Breast epithelium (tissue), 4 donors: ENCODE measurements at regions of chr2 and their contacts with region 1.

Region 1: GRCh38 chr2:40554668-40555285 is 102.9 kb upstream of the SLC8A1 start:
- DNase-seq: peak in 1 of 2 donors; percentile 34
- H3K4me3 ChIP-seq: no peak overlapping the region
- H3K27ac ChIP-seq: no peak overlapping the region
- H3K4me1 ChIP-seq: no peaks in the 10 kb centered on the region
- H3K27me3 ChIP-seq: no peaks in the 10 kb centered on the region
- CTCF ChIP-seq: peak; percentile 38 to 61 (median 59)
- POLR2A ChIP-seq: no peak

Region 2: GRCh38 chr2:40511661-40512213 is 43.0 kb before region 1 on chr2:
- intact Hi-C with region 1: no loop called
- DNase-seq: no peak
- H3K4me3 ChIP-seq: peak overlapping the region; percentile 28 to 53 (median 33)
- H3K27ac ChIP-seq: peak overlapping the region in 1 of 2 donors; percentile 67
- H3K4me1 ChIP-seq: no peaks in the 10 kb centered on the region
- H3K27me3 ChIP-seq: no peaks in the 10 kb centered on the region
- CTCF ChIP-seq: no peak
- POLR2A ChIP-seq: no peak

Region 3: DNA sequence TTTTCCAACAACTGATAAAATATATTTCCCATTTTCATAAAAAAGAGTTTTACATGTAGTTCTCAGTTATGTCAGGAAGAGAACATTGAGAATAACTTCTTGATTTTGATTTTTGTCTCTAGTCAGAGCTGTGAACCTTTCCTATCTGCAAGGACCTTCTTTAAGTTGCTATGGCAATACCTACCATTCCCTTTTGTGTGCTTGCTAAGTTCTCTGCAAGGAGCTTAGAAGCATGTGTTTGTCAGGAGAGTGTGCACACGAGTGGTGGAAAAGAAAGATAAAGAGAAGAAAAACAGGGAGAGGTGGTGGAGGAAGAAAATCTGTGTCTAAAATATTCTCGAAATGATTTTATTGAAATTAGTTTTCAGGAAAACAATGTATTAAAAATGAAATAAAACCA is 37.4 kb after region 1 on chr2:
- intact Hi-C with region 1: no loop called
- DNase-seq: no peak
- H3K4me3 ChIP-seq: no peak overlapping the region
- H3K27ac ChIP-seq: no peak overlapping the region
- H3K4me1 ChIP-seq: no peaks in the 10 kb centered on the region
- H3K27me3 ChIP-seq: no peaks in the 10 kb centered on the region
- CTCF ChIP-seq: no peak
- POLR2A ChIP-seq: no peak

Region 4: GRCh38 chr2:40886660-40887059 is 331.9 kb after region 1 on chr2:
- intact Hi-C with region 1: loop called (anchors 5 kb)
- DNase-seq: no peak
- H3K4me3 ChIP-seq: no peak overlapping the region
- H3K27ac ChIP-seq: no peak overlapping the region
- H3K4me1 ChIP-seq: no peaks in the 10 kb centered on the region
- H3K27me3 ChIP-seq: no peaks in the 10 kb centered on the region
- CTCF ChIP-seq: no peak
- POLR2A ChIP-seq: no peak

Region 5: DNA sequence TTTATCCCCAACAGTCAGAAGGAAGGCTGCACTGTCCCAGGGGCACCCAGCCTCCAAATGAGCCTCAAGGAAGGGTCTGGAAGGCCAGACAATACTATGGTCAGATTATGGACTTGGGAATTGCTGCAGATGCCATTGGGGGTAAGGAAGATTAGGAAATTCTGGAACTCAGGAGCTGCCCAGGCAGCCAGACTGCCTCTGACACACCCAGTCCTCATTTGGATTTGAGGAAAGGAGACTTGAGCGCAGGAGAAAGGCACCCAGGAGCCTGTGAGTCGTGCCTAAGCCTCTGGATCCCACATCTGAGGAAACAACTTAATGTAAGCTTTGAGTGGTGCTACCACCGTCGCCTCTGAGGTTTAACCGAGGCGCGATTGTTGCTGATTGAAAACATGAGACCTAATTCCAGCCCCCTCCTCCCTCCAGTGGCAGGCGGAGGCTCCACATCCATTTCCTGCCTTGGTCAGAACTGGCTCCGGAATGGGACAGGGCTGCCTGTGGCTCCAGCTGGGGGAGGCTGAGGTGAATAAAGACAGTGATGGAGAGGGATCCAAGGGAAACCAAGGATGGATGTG is 1316.3 kb after region 1 on chr2:
- intact Hi-C with region 1: no loop called
- DNase-seq: no peak
- H3K4me3 ChIP-seq: no peak overlapping the region
- H3K27ac ChIP-seq: no peak overlapping the region
- H3K4me1 ChIP-seq: no peaks in the 10 kb centered on the region
- H3K27me3 ChIP-seq: no peaks in the 10 kb centered on the region
- CTCF ChIP-seq: no peak
- POLR2A ChIP-seq: no peak